ENCODE measurements at regions of chrX and their contacts with region 1.

Region 1: DNA sequence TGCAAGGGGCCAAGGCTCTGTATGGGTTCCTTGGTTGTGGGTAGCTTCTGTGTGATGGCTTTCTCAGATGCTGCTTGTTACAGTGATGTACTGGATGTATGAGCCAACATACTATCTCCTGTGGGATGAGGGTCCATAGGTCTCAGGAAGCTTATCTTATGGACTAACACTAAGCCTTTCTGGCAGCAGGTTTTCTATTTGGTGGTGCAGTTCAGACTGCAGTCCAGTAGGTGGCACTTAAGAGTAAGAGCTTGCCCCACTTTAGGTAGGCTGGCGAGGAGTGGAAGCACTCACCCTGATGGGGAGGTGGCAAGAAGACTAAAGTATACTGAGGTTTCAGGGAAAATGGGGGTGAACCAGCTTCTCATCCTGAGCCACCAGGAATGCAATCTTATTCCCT is 306.7 kb upstream of the MAOA start:
- DNase-seq: peak in 1 of 2 experiments; percentile 55
- H3K4me3 ChIP-seq: no peak overlapping the region
- H3K27ac ChIP-seq: no peak overlapping the region
- H3K4me1 ChIP-seq: no peaks in the 10 kb centered on the region
- H3K27me3 ChIP-seq: no peaks in the 10 kb centered on the region
- CTCF ChIP-seq: peak; percentile 28 to 67 (median 49); a peak in 3 of 4 replicates
- EP300 ChIP-seq: no peak
- POLR2A ChIP-seq: no peak
- RAD21 ChIP-seq: peak; percentile 69 to 81

Region 2: DNA sequence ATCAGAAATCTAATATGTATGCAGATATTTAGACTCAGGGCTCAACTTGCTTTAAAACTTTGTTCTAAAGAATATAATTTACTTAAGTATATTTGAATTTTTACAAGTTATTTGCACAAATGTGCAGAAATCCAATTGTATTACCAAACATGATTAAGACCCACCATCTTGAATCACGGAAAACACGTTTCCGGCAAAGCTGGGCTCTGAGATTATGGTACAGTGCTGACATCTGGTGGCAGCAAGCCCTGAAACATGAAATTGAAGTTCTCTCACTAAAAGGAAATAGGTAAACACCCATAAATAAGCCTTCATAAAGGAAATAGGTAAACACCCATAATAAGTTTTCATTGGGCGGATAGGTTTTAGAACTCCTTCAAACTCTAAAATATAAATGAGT is 208.4 kb after region 1 on chrX:
- CTCF ChIA-PET with region 1: interaction called, 20 read pairs
- POLR2A ChIA-PET with region 1: no interaction called
- DNase-seq: no peak
- H3K4me3 ChIP-seq: no peak overlapping the region
- H3K27ac ChIP-seq: no peak overlapping the region
- H3K4me1 ChIP-seq: no peaks in the 10 kb centered on the region
- H3K27me3 ChIP-seq: no peaks in the 10 kb centered on the region
- CTCF ChIP-seq: peak; percentile 5 to 61 (median 38); a peak in 3 of 4 replicates
- EP300 ChIP-seq: no peak
- POLR2A ChIP-seq: no peak
- RAD21 ChIP-seq: peak; percentile 82 to 85